RWPE1 (cell line): ENCODE measurements at regions of chr1 and their contacts with region 1.

Region 1: GRCh38 chr1:47725992-47726855 is 271.0 kb downstream of the TRABD2B start:
- DNase-seq: peak; percentile 80
- H3K27ac ChIP-seq: no peak overlapping the region
- CTCF ChIP-seq: peak; percentile 94

Region 2: GRCh38 chr1:47656719-47657685 is 69.2 kb before region 1 on chr1:
- CTCF ChIA-PET with region 1: no interaction called
- POLR2A ChIA-PET with region 1: no interaction called
- DNase-seq: no peak
- H3K27ac ChIP-seq: no peak overlapping the region
- CTCF ChIP-seq: no peak

Region 3: DNA sequence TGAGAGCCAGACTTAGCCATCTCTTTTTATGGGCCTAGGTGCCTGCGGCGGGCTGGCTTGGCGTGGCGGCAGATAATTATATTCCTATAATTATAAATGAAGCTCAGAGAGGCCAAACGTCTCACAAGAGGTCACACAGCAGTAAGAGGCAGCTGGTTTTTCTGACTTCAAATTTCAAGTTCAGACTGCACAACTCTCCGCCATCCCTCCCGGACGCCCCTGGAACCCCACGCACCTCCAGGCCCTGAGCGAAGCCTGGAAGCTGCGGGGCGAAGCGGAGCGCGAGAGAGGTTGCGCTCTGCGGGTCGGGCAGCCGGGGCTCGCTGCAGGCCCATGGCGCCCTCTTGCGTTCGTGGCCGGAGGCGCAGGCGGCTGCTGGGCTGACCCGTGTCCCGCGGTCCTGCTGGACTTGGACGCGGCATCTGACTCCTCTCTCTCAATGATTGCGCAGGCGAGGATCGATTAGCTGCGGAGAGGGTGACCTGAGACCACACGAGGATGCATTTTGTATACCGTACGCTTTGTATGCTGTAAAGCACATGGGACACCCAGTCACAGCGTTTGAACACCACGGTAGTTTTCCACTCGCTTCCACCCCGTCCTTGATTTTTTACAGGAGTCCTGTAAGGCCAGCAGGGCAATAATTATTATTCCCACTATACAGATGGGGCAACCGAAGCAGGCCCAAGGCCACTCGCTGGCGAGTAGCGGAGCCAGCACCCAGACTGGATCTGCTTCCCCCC is 15.7 kb before region 1 on chr1:
- CTCF ChIA-PET with region 1: interaction called, 11 read pairs
- POLR2A ChIA-PET with region 1: no interaction called
- DNase-seq: peak; percentile 88
- H3K27ac ChIP-seq: no peak overlapping the region
- CTCF ChIP-seq: peak; percentile 96